BJ (cell line): ENCODE measurements at regions of chr1 and their contacts with region 1.

Region 1: DNA sequence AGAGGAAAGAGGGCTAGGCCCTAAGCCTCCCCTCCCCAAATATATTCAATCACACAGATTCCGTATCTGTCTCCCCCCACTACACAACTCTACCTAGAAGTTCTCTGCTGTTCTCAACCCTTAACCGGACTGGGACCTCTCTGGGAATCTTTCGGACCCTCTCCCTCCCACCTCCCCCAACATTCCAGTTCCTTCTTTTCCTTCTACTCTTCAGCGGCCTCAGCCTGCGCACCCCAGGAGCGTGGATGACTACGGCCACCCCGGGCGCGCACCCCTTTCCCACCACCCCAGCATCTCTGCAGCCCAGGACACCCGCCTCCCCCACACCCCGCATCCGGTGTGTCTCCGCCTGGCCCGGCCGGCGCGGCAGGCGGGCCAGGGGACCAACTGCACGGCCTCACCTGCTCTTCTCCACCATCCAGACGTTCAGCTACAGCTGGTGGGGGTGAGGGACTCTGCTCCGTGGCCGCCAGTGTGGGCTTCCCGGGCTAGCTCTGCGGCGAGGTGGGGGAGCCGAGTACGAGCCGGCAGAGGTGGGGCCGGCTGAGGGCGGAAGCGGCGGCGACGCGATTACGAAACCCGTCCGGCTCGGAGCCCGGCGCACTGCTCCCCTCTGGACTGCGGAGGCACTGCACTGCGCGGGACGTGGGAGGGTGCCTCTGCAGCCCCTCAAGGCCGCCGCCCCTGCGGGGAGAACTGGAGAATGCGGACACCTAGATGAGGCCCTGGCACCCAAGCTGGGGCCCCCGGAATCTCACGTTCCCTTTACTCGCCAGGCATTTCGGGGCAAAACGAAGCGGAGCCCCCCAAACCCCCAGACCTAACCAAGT is at the start of gene CDC42SE1:
- DNase-seq: no peak
- H3K4me3 ChIP-seq: peak within 1 kb of the TSS; percentile 88
- H3K27me3 ChIP-seq: no peaks in the 10 kb centered on the region
- CTCF ChIP-seq: peak; percentile 87
- polyA plus RNA-seq, gene CDC42SE1: 59.3 and 60.4 TPM in 2 replicates

Region 2: GRCh38 chr1:150537732-150538684 is 521.3 kb before region 1 on chr1:
- CTCF ChIA-PET with region 1: no interaction called
- POLR2A ChIA-PET with region 1: interaction called, 17 read pairs
- DNase-seq: no peak
- H3K4me3 ChIP-seq: no peak overlapping the region
- H3K27me3 ChIP-seq: no peaks in the 10 kb centered on the region
- CTCF ChIP-seq: 0 out of 2 replicates have a peak, but pooled peaks have one; percentile 16

Region 3: GRCh38 chr1:150869683-150870082 is 189.6 kb before region 1 on chr1:
- CTCF ChIA-PET with region 1: no interaction called
- POLR2A ChIA-PET with region 1: interaction called, 13 read pairs
- DNase-seq: no peak
- H3K4me3 ChIP-seq: no peak overlapping the region
- H3K27me3 ChIP-seq: no peaks in the 10 kb centered on the region
- CTCF ChIP-seq: no peak

Region 4: GRCh38 chr1:151024540-151025146 is 34.6 kb before region 1 on chr1:
- CTCF ChIA-PET with region 1: interaction called, 15 read pairs
- POLR2A ChIA-PET with region 1: interaction called, 3 read pairs
- DNase-seq: no peak
- H3K4me3 ChIP-seq: no peak overlapping the region
- H3K27me3 ChIP-seq: no peaks in the 10 kb centered on the region
- CTCF ChIP-seq: peak; percentile 81

Region 5: GRCh38 chr1:151047925-151048645 is 11.2 kb before region 1 on chr1:
- CTCF ChIA-PET with region 1: interaction called, 13 read pairs
- POLR2A ChIA-PET with region 1: no interaction called
- DNase-seq: no peak
- H3K4me3 ChIP-seq: peak overlapping the region; percentile 60
- H3K27me3 ChIP-seq: no peaks in the 10 kb centered on the region
- CTCF ChIP-seq: peak; percentile 60

Region 6: DNA sequence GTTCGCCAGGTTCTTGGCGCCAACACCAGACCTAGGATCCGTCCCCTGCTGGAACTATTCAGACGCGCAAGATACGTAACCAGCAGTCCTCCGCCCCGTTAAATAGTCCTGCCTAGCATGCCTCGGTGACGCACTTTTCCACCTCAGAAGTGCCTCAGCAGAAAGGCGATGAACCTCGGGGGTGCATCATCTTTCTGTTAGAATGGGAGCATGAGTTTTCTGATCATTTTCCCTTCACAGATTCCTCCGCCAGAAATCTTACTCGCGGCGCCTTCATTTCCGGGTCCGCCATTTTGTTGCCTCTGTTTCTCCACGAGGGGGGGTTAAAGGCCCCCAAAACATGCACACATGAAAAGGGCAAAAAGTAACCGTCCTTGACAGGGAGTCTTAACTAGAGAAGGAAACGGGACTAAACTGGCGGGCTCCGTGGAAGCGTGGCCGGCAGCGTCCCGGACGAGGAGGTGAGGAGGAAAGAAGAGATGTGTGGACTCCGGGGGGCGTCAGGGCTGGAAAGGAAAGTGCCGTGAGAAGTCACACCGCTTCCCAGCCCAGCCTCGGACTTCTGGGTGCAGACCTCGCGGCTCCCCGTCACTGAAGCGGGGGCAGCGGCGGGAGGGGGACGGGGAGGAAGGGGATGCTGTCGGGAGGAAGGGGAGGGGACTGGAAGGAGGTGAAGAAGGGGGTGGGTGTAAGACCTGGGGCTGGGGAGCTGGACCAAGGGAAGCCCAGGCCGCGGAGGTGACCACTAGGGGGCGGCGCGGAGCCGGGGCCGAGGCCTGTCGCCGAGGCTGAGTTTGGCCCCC is 11.4 kb after region 1 on chr1 and contains the start of gene GABPB2:
- CTCF ChIA-PET with region 1: interaction called, 13 read pairs
- POLR2A ChIA-PET with region 1: no interaction called
- DNase-seq: peak; percentile 69
- H3K4me3 ChIP-seq: peak within 1 kb of the TSS; percentile 94
- H3K27me3 ChIP-seq: no peaks in the 10 kb centered on the region
- CTCF ChIP-seq: peak; percentile 99
- polyA plus RNA-seq, gene GABPB2: 16.2 and 16.7 TPM in 2 replicates

Region 7: GRCh38 chr1:152533327-152533938 is 1474.1 kb after region 1 on chr1:
- CTCF ChIA-PET with region 1: no interaction called
- POLR2A ChIA-PET with region 1: no interaction called
- DNase-seq: no peak
- H3K4me3 ChIP-seq: no peak overlapping the region
- H3K27me3 ChIP-seq: peaks cover 1% of the 10 kb centered on the region; the same call in 1 of the 2 replicates
- CTCF ChIP-seq: peak; percentile 77